SK-N-SH (cell line): ENCODE measurements at regions of chr15 and their contacts with region 1.

Region 1: DNA sequence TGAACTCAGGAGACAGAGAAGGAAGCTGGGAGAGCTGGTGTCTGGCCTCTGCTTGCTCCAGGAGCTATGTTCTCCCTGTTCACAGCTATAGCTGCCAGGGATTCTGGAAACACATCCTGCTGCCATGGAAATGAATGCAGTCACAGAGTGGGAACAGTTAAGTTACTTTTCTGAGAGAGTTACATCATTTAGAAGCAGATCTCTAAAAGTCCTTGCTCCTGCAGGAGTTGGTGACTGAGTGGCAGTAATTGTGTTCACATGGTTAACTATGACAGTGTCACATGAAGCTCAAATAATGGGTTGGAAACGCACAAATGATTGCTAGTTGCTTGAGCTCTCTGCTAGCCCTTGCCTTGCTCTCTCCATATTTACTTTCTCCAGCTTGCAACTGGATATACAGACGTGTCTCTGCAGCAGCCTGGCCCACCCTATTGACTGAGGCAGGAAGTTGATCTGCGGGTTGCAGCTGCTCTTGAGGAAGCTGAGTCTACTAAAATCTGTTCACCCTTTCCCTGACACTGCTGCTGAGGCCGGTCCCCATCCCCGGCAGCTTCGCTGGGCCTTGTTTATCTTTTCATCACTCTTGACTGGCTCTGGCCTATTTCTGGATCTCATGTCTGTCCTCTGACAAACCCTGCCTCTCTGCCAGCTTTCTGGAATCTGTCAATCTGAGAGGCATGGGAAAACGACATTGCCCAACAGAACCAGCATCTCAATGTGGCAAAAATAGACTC is 16.7 kb upstream of the ISLR start:
- DNase-seq: peak; percentile 79
- H3K4me3 ChIP-seq: 0 out of 4 replicates have a peak overlapping the region, but pooled peaks of 1 of the 2 experiments have one; percentile 10
- H3K27ac ChIP-seq: peak overlapping the region; percentile 82 to 93
- H3K4me1 ChIP-seq: peaks cover 12 to 30% of the 10 kb centered on the region in 2 experiments; a peak in 3 of 4 replicates
- H3K27me3 ChIP-seq: no peaks in the 10 kb centered on the region
- CTCF ChIP-seq: no peak
- EP300 ChIP-seq: peak; percentile 43 to 94; a peak in 3 of 4 replicates
- RAD21 ChIP-seq: 0 out of 2 replicates have a peak, but pooled peaks have one; percentile 21

Region 2: DNA sequence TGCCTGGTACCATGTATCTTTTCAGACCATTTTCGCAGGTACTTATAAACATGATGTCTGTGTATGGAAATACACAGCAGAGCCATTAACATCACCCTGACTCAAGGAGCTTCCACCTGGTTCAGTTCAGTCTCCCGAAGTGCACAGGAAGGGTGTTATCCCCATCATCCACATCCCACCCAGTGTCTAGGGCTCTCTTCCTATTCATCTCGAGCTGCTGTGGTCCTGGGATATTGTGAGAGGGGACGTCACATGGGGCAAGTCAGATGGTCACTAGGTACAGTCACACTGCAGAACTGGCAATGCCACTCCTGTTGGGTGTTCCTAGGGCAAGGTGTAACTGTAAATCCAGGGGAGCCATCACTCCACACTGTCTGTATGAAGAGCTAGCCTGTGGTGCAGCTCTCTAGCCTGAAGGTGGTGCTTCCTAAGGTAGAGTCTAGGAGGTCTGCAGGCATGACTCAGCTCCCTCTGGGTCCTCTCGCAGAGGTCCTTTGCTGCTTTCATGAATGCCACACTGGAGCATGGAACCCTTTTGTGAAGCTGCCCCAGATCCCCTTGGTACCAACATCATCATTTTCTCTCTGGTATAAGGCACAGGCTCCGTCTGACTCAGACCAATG is 12.6 kb before region 1 on chr15:
- CTCF ChIA-PET with region 1: interaction called, 12 read pairs
- POLR2A ChIA-PET with region 1: no interaction called
- DNase-seq: no peak
- H3K4me3 ChIP-seq: no peak overlapping the region
- H3K27ac ChIP-seq: no peak overlapping the region
- H3K4me1 ChIP-seq: peaks cover 3 to 15% of the 10 kb centered on the region in 2 experiments; a peak in 3 of 4 replicates
- H3K27me3 ChIP-seq: no peaks in the 10 kb centered on the region
- CTCF ChIP-seq: no peak
- EP300 ChIP-seq: no peak
- RAD21 ChIP-seq: no peak

Region 3: GRCh38 chr15:74172701-74173379 is 16.0 kb after region 1 on chr15:
- CTCF ChIA-PET with region 1: interaction called, 39 read pairs
- POLR2A ChIA-PET with region 1: interaction called, 11 read pairs
- DNase-seq: peak; percentile 61
- H3K4me3 ChIP-seq: no peak overlapping the region
- H3K27ac ChIP-seq: peak overlapping the region in 1 of 2 experiments; percentile 86; a peak in 3 of 4 replicates
- H3K4me1 ChIP-seq: peaks cover 26 to 68% of the 10 kb centered on the region in 2 experiments; a peak in 3 of 4 replicates
- H3K27me3 ChIP-seq: no peaks in the 10 kb centered on the region
- CTCF ChIP-seq: no peak
- EP300 ChIP-seq: no peak
- RAD21 ChIP-seq: no peak